ENCODE measurements at regions of chr16 and their contacts with region 1.

Region 1: GRCh38 chr16:67043420-67043819 is 14.5 kb downstream of the CBFB start:
- DNase-seq: no peak
- ATAC-seq: no peak
- H3K4me3 ChIP-seq: no peak overlapping the region
- H3K27ac ChIP-seq: no peak overlapping the region
- H3K4me1 ChIP-seq: no peaks in the 10 kb centered on the region
- CTCF ChIP-seq: no peak
- EP300 ChIP-seq: no peak
- POLR2A ChIP-seq: no peak
- RAD21 ChIP-seq: no peak

Region 2: GRCh38 chr16:67028555-67029248 is 14.7 kb before region 1 on chr16 and contains the start of gene CBFB:
- CTCF ChIA-PET with region 1: interaction called, 7 read pairs
- POLR2A ChIA-PET with region 1: interaction called, 10 read pairs
- DNase-seq: peak; percentile 95 to 97
- ATAC-seq: peak; percentile 93 to 94
- H3K4me3 ChIP-seq: peak within 1 kb of the TSS; percentile 95
- H3K27ac ChIP-seq: peak within 1 kb of the TSS; percentile 72 to 93
- H3K4me1 ChIP-seq: peaks cover 12% of the 10 kb centered on the region
- CTCF ChIP-seq: no peak
- EP300 ChIP-seq: no peak
- POLR2A ChIP-seq: peak; percentile 96
- RAD21 ChIP-seq: no peak; a peak in 1 of 5 replicates
- polyA plus RNA-seq, gene CBFB: 35.9 and 61.3 TPM in 2 replicates

Region 3: DNA sequence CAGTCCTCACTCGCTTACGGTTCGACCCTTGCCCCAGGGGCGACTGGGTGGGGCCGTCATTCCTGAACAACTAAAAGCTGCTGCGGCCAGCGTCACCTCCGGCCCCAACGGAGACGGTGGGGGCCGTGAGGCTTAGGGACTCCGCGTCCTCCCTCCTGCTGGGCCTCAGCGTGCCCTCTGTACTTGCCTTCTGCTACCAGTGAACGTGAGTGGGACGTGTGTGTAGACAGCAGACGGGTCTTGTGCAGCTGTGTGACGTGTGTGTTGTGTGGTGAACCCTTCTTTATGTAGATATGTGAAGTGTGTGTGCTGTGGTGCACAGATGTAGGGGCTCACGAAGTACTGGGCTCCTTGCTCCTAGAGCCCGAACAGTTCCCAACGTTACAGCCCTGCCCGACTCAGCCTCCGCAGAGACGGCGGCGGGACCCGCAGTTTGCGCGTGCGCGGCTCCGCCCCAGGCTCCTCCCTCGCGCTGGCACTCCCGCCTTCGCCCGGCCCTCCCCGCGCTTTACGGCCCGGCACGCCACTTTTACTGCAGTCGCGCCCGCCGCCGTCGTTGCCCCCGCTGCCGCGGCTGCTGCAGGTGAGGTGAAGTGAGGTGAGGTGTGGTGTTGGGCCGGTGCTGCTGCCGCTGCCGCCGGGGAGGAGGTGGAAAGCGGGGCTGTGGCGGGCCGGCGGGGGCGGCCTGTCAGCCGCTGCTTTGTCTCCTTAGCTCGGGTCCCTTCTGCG is 66.2 kb after region 1 on chr16 and contains the start of gene PHAF1:
- CTCF ChIA-PET with region 1: no interaction called
- POLR2A ChIA-PET with region 1: no interaction called
- DNase-seq: peak; percentile 92 to 95
- ATAC-seq: peak; percentile 93 to 94
- H3K4me3 ChIP-seq: peak within 1 kb of the TSS; percentile 89
- H3K27ac ChIP-seq: peak within 1 kb of the TSS; percentile 81 to 93
- H3K4me1 ChIP-seq: peaks cover 34% of the 10 kb centered on the region
- CTCF ChIP-seq: no peak
- EP300 ChIP-seq: no peak
- POLR2A ChIP-seq: peak; percentile 98
- RAD21 ChIP-seq: no peak
- polyA plus RNA-seq, gene PHAF1: 37.6 and 48.6 TPM in 2 replicates

Measured in A549 (cell line).